ENCODE measurements at regions of chr2 and their contacts with region 1.

Region 1: DNA sequence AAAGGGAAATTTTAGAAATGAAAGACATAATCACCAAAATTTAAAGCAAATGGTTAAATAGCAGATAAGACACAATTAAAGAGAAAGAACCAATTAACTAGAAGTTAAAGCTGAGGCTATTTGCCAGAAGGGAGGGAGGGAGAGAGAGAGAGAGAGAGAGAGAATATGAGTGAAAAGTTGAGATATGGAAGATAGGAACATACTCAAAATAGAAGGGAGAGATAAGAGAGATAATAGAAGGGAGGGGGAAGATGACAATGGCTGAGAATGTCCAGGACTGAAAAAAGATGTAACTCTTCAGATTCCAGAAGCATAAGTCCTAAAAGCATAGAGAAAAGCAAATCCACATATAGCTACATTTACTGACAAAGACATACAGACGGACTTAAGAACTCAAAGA is 17.1 kb upstream of the AAK1 start:
- DNase-seq: no peak
- H3K4me3 Mint-ChIP-seq: no peak overlapping the region
- H3K27ac Mint-ChIP-seq: no peak overlapping the region
- H3K4me1 Mint-ChIP-seq: peaks cover 8% of the 10 kb centered on the region
- H3K27me3 Mint-ChIP-seq: no peaks in the 10 kb centered on the region

Region 2: DNA sequence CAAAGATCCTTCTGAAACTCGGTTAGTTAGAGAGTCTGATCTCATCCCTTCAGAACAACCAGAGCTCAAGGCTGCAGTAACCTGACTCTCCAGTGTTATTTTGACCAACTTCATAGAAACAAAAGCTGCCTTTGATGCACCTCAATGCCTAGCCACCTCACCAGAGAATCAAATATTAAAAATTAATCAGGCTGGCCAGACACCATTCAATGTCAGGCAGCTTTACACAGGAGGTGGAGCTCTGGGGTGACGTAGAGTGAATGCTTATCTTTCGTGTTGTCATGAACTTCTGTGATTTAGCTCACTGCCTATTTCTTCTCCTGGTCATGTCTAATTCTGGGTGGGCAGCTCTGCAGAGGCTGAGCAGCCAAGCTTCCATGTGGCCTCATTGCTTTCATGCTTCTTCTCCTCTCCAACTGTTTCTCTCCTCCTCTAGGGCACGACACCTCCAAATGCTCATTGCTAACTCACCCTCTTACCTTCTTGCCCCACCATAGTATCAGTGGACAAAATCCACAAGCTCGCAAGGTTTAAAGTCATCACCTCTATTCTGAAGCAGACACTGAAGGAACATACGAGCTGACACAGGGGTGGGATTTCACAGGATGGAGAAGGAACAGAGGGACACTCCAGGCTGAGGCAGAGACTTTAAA is 56.5 kb before region 1 on chr2:
- CTCF ChIA-PET with region 1: no interaction called
- POLR2A ChIA-PET with region 1: no interaction called
- DNase-seq: no peak
- H3K4me3 Mint-ChIP-seq: no peak overlapping the region
- H3K27ac Mint-ChIP-seq: no peak overlapping the region
- H3K4me1 Mint-ChIP-seq: peaks cover 78% of the 10 kb centered on the region
- H3K27me3 Mint-ChIP-seq: no peaks in the 10 kb centered on the region

Region 3: DNA sequence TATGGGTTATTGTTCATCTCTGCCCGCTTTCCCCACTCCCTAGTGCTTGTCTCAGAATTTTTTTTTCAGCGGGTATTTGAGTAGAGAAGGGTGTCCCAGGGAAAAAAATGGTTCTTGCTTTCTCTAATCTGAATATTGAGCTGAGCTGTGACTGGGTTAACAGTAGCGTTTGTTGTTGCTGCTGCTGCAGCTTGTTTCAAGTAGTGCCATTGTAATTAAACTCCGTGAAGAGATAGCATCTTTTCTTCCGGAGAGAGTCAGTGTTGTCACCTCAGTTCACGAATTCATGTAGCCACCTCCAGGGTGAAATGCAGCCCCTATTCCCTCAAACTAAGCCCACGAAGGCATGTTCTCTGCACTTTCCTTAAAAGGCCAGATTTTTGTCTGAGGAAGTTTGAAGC is 15.6 kb before region 1 on chr2:
- CTCF ChIA-PET with region 1: interaction called, 25 read pairs
- POLR2A ChIA-PET with region 1: interaction called, 4 read pairs
- DNase-seq: peak; percentile 68
- H3K4me3 Mint-ChIP-seq: peak overlapping the region; percentile 84
- H3K27ac Mint-ChIP-seq: peak overlapping the region; percentile 99
- H3K4me1 Mint-ChIP-seq: peaks cover 48% of the 10 kb centered on the region
- H3K27me3 Mint-ChIP-seq: no peaks in the 10 kb centered on the region

Region 4: DNA sequence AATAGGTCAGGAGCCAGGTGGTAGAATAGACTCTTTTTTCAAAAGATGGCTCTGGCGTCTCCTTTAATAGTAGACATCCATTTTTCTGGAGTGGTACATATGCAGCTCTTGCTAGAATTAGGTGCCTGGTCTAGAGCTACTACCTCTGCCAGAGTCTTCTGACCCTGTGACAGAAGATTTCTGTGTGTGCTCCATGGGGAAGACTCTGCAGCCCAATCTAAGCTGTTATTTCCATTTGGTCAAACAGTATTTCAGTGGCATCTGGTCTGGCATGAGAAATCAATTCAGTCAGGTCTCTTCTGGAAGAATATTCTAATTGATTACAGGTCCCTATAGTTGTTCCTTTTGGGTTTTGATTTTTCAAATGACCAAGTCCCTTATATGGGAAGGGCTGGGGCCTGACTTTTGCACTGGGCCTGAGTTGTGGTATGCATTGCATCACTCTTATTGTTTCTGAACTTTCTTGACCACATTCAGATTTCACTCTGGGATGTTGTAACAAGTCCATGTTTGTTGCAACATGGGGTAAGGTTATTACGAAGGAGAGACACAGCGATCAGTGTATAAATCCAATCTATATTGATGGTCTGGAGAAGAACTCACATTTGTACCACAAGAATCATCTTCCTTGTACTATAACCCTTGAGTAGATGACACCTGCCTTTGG is 266.3 kb after region 1 on chr2:
- CTCF ChIA-PET with region 1: no interaction called
- POLR2A ChIA-PET with region 1: no interaction called
- DNase-seq: no peak
- H3K4me3 Mint-ChIP-seq: no peak overlapping the region
- H3K27ac Mint-ChIP-seq: no peak overlapping the region
- H3K4me1 Mint-ChIP-seq: peaks cover 17% of the 10 kb centered on the region
- H3K27me3 Mint-ChIP-seq: no peaks in the 10 kb centered on the region